Activated CD8-positive, alpha-beta T cell treated with anti-CD3 and anti-CD28 coated beads, Interleukin-2, amount 10 ng/mL, durations not matched to agents 7 days and 5 days (primary cell): ENCODE measurements at regions of chr1 and their contacts with region 1.

Region 1: DNA sequence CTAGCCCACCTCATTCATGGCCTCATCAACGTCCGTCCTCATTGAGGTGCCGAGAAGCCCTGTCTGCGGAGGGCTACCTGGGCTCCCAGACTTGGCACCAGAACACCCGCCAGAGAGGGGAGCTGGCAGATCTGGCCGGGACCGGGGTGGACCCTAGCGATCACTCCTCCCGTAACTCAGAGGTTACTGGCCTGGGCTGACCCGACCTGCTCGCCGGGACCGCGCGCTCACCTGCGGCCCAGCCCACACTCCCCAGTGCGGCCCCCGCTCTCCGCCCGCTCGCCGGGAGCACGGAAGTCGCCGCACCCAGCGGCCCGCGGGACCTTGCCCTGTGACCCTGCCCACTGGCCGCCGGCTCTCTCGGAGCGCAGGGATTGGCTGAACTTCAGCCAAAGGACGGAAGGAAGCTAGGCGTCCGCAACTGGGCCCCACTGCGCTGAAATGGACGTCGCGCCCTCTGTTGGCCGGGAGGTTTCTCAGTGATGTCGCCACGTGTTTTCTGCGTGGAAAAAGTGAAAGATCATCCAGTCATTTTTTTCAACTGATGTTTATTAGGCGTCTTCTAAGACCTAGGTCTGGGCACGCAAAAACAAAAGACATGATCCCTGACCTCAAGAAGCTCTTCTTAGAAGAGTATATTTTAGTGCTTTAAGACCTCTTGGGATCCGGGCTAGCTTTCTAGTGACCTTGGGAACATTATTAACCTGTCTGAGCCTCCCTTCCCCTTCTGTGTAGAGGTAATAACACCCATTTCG is at the start of gene SMIM12:
- DNase-seq: peak; percentile 92
- ATAC-seq: peak; percentile 96
- H3K4me3 Mint-ChIP-seq: peak within 1 kb of the TSS; percentile 99
- H3K27ac Mint-ChIP-seq: peak within 1 kb of the TSS; percentile 96
- H3K4me1 Mint-ChIP-seq: peaks cover 60% of the 10 kb centered on the region
- H3K27me3 Mint-ChIP-seq: no peaks in the 10 kb centered on the region
- total RNA-seq, gene SMIM12: 50.4 to 52.2 TPM

Region 2: DNA sequence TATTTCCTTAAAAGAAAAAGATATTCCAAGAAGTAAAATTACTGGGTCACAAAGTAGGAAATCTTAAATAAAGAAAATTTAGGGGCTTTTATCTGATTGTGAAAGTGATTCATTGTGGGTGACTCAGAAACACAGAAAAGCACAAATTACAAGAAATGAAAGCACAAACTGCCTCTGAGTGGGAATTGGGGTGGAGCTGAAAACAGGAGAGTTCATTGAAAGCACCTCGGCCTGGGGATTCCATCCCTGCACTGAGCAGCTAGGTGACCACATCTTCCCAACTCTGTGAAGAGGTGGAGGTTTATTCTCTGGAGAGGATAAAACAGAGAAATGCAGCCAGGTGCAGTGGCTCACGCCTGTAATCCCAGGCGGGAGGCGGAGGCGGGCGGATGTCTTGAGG is 59.4 kb before region 1 on chr1:
- CTCF ChIA-PET with region 1: no interaction called
- POLR2A ChIA-PET with region 1: no interaction called
- DNase-seq: no peak
- ATAC-seq: no peak
- H3K4me3 Mint-ChIP-seq: no peak overlapping the region
- H3K27ac Mint-ChIP-seq: no peak overlapping the region
- H3K4me1 Mint-ChIP-seq: peaks cover 2% of the 10 kb centered on the region
- H3K27me3 Mint-ChIP-seq: no peaks in the 10 kb centered on the region

Region 3: DNA sequence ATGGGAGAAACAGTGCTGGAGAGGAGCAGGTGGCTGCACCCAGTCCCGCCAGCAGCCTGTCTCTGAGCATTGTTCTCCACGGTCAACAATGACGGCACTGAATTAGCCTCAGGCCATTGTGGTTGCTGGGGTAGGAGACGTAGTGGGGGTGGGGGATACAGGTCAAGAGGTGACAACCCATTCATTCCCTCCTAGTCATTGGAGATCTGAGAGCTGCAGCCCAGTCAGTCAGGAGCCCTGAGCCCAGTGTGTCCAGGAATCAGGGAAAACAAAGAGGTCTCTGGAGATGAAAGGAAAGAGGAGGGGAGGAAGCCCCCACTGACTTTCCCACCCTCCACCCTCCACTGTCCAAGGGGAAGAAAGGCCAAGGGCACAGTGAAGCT is 15.4 kb before region 1 on chr1:
- CTCF ChIA-PET with region 1: no interaction called
- POLR2A ChIA-PET with region 1: no interaction called
- DNase-seq: no peak
- ATAC-seq: no peak
- H3K4me3 Mint-ChIP-seq: no peak overlapping the region
- H3K27ac Mint-ChIP-seq: no peak overlapping the region
- H3K4me1 Mint-ChIP-seq: peaks cover 12% of the 10 kb centered on the region
- H3K27me3 Mint-ChIP-seq: no peaks in the 10 kb centered on the region

Region 4: GRCh38 chr1:34984793-34985608 is 125.4 kb after region 1 on chr1 and contains the start of gene TMEM35B:
- CTCF ChIA-PET with region 1: interaction called, 4 read pairs
- POLR2A ChIA-PET with region 1: interaction called, 14 read pairs
- DNase-seq: peak; percentile 86
- ATAC-seq: peak; percentile 98
- H3K4me3 Mint-ChIP-seq: peak within 1 kb of the TSS; percentile 98
- H3K27ac Mint-ChIP-seq: peak within 1 kb of the TSS; percentile 96
- H3K4me1 Mint-ChIP-seq: peaks cover 31% of the 10 kb centered on the region
- H3K27me3 Mint-ChIP-seq: no peaks in the 10 kb centered on the region
- total RNA-seq, gene TMEM35B: 24.8 to 26.7 TPM